ENCODE measurements at regions of chr2 and their contacts with region 1.

Region 1: GRCh38 chr2:230847883-230848388 is 16.8 kb upstream of the ITM2C start:
- DNase-seq: peak; percentile 76 to 93 (median 82)
- ATAC-seq: peak; percentile 92
- H3K4me3 ChIP-seq: no peak overlapping the region
- H3K4me3 Mint-ChIP-seq: no peak overlapping the region
- H3K27ac ChIP-seq: no peak overlapping the region
- H3K27ac Mint-ChIP-seq: no peak overlapping the region
- H3K4me1 ChIP-seq: peaks cover 13% of the 10 kb centered on the region
- H3K4me1 Mint-ChIP-seq: peaks cover 5% of the 10 kb centered on the region
- H3K27me3 ChIP-seq: peaks cover 3 to 7% of the 10 kb centered on the region in 2 experiments
- H3K27me3 Mint-ChIP-seq: peaks cover 37% of the 10 kb centered on the region
- CTCF ChIP-seq: peak; percentile 90

Region 2: GRCh38 chr2:230824406-230824978 is 23.4 kb before region 1 on chr2:
- CTCF ChIA-PET with region 1: interaction called, 3 read pairs
- POLR2A ChIA-PET with region 1: no interaction called
- intact Hi-C with region 1: loop called in 1 of 2 experiments (anchors 2 kb)
- DNase-seq: peak in 12 of 14 experiments; percentile 13 to 88 (median 38)
- ATAC-seq: peak; percentile 85
- H3K4me3 ChIP-seq: no peak overlapping the region
- H3K4me3 Mint-ChIP-seq: peak overlapping the region; percentile 49
- H3K27ac ChIP-seq: no peak overlapping the region
- H3K27ac Mint-ChIP-seq: peak overlapping the region; percentile 18
- H3K4me1 ChIP-seq: peaks cover 24% of the 10 kb centered on the region
- H3K4me1 Mint-ChIP-seq: peaks cover 10% of the 10 kb centered on the region
- H3K27me3 ChIP-seq: peaks cover 27 to 28% of the 10 kb centered on the region in 2 experiments
- H3K27me3 Mint-ChIP-seq: peaks cover 35% of the 10 kb centered on the region
- CTCF ChIP-seq: peak; percentile 76

Region 3: DNA sequence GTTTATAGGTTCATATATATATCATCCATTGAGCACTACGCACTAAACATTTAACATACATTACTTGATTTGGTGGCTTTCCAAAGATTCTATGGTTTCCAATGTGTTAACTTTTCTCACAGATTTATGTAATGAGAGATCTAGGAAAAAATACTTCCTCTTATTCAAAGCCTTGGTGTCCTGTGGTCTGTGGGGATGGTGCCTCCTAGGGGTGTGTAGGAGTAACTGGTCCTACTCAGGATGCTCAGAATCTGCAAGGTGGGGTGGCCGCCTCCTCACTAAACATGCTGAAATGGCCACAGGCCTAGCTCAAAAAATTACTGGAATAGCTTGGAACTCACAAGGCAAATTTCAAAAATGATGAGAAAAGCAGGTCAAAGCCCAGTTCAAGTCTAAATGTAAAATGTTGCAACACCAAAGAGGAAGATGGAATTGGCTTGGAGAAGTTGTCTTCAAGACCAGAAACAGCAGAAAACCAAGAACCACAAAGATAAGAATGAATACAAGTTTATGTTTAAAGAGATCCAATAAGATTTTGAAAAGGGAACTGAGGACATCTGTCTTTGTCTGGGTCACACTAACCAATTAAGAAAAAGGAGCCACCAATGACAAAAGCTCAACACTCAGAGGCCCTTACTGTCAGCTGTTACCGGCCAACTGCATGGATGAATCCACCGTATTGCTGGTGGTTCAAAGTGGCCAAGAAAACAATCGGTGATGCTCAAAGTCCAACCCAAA is 65.6 kb after region 1 on chr2:
- CTCF ChIA-PET with region 1: no interaction called
- POLR2A ChIA-PET with region 1: no interaction called
- intact Hi-C with region 1: loop called in 1 of 2 experiments (anchors 5 kb)
- DNase-seq: peak in 6 of 14 experiments; percentile 23 to 62 (median 40)
- ATAC-seq: peak; percentile 60
- H3K4me3 ChIP-seq: no peak overlapping the region
- H3K4me3 Mint-ChIP-seq: no peak overlapping the region
- H3K27ac ChIP-seq: no peak overlapping the region
- H3K27ac Mint-ChIP-seq: no peak overlapping the region
- H3K4me1 ChIP-seq: peaks cover 7% of the 10 kb centered on the region
- H3K4me1 Mint-ChIP-seq: peaks cover 23% of the 10 kb centered on the region
- H3K27me3 ChIP-seq: no peaks in the 10 kb centered on the region
- H3K27me3 Mint-ChIP-seq: no peaks in the 10 kb centered on the region
- CTCF ChIP-seq: peak; percentile 48

Region 4: DNA sequence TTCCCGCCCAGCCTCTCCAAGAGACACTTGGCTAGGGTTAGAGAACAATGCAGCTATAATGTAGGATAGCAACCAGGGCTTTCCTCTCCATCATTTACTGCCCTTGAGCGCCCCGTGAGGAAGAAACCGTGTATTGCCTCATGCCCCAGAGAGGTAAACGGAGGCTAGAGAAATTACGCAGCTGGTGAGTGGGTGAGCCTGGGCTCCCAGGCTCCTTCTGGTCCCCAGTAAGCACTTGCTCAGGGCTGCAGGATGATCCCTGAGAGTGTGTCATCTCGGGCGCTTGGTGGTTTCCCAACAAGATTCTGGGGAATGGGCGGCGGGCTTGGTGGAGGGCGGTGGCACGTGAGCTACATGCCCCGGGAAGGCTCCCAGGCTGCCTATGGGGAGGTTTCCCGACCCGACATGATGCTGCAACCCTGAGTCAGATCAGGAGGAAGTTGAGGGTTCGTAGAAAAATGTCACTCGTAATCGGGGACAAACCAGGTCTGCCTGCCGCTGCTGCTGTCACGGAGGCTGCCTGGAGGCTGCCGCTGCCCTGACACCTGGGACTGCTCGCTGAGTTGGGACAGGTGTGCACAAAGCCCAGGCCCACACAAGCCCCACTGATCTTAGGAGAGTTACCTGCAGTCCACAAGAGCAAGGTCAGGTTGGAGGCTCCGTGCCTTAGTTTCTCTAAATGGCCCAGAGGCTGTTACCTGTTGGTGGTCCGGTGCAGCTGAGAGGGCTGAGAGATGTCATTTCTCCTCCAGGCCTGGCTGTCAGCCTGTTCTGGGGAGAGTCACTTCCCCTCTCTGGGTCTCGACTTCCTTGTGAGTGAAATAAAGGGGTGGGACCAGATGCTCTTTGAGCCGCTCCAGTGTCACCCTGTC is 76.8 kb after region 1 on chr2 and contains the start of gene GPR55:
- CTCF ChIA-PET with region 1: interaction called, 4 read pairs
- POLR2A ChIA-PET with region 1: no interaction called
- intact Hi-C with region 1: loop called in 1 of 2 experiments (anchors 5 kb)
- DNase-seq: peak in 12 of 14 experiments; percentile 21 to 79 (median 44)
- ATAC-seq: peak; percentile 74
- H3K4me3 ChIP-seq: peak within 1 kb of the TSS; percentile 58
- H3K4me3 Mint-ChIP-seq: peak within 1 kb of the TSS; percentile 90
- H3K27ac ChIP-seq: peak within 1 kb of the TSS; percentile 27 to 48
- H3K27ac Mint-ChIP-seq: peak within 1 kb of the TSS; percentile 89
- H3K4me1 ChIP-seq: peaks cover 43% of the 10 kb centered on the region
- H3K4me1 Mint-ChIP-seq: peaks cover 51% of the 10 kb centered on the region
- H3K27me3 ChIP-seq: no peaks in the 10 kb centered on the region
- H3K27me3 Mint-ChIP-seq: no peaks in the 10 kb centered on the region
- CTCF ChIP-seq: no peak
- total RNA-seq, gene GPR55: 2.9 to 3.8 TPM

Region 5: GRCh38 chr2:230987137-230988020 is 139.4 kb after region 1 on chr2:
- CTCF ChIA-PET with region 1: interaction called, 5 read pairs
- POLR2A ChIA-PET with region 1: interaction called, 3 read pairs
- intact Hi-C with region 1: loop called (anchors 1 kb)
- DNase-seq: peak; percentile 36 to 86 (median 73)
- ATAC-seq: peak; percentile 74
- H3K4me3 ChIP-seq: peak overlapping the region; percentile 59
- H3K4me3 Mint-ChIP-seq: peak overlapping the region; percentile 38
- H3K27ac ChIP-seq: no peak overlapping the region
- H3K27ac Mint-ChIP-seq: no peak overlapping the region
- H3K4me1 ChIP-seq: peaks cover 31% of the 10 kb centered on the region
- H3K4me1 Mint-ChIP-seq: peaks cover 22% of the 10 kb centered on the region
- H3K27me3 ChIP-seq: peaks cover 6 to 10% of the 10 kb centered on the region in 2 experiments
- H3K27me3 Mint-ChIP-seq: peaks cover 24% of the 10 kb centered on the region
- CTCF ChIP-seq: peak; percentile 92

Measured in CD4-positive, alpha-beta T cell (primary cell).